Dorsolateral prefrontal cortex (tissue), 120 donors: ENCODE measurements at regions of chr9 and their contacts with region 1.

Region 1: DNA sequence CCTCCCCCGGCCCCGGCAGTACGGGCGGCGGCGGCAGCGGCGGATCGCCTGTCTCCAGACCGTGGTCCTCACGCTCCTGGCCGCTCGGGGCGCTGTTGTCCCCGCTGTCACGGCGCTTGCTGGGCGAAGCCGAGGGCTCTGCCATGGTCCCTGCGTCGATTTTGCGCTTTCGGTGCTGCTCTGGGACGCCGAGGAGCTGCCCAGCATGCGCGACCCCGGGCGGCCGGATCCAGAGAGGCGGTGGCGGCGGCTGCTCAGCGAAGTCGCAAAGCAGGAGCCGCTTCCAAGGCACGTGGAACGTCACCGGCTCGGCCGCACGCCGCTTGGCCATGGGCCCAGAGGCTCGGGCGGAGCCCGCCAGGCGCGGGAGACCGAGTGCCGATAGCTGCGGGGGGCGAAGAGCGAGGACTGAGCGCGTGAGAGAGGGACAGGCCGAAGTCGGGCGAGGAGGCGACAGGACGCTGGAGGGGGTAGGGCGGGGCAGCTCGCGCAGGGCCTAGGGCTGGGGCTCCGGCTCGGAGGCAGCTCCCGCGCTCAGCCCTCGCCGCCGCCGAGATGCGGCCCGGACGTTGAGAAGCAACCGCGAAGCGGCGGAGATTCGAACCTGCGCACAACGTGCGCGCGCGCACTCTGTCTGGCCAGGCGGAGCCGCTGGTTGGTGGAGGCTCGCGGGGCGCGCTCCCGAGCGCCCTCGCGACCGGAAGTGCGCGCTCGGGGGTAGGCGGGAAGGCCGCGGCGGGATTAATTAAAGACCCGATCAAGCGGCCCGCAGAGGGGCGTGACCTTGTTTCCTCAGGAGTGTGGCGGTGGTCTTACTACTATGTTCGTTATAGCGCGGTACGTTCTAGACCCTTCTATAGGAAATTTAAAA is at the start of gene C9orf40:
- DNase-seq: peak; percentile 78 to 94 (median 87)
- H3K4me3 ChIP-seq: peak within 1 kb of the TSS; percentile 58 to 95 (median 88)
- H3K27ac ChIP-seq: peak within 1 kb of the TSS; percentile 75 to 99 (median 96)
- H3K27me3 ChIP-seq: no peaks in the 10 kb centered on the region
- CTCF ChIP-seq: peak in 55 of 56 donors; percentile 24 to 86 (median 68)
- total RNA-seq, gene C9orf40: 5.0 to 13.6 (median 8.0) TPM

Region 2: GRCh38 chr9:74773886-74774479 is 178.5 kb before region 1 on chr9:
- intact Hi-C with region 1: loop called (anchors 1 to 5 kb)
- DNase-seq: peak; percentile 72 to 94 (median 84)
- H3K4me3 ChIP-seq: no peak overlapping the region
- H3K27ac ChIP-seq: peak overlapping the region in 4 of 59 donors; percentile 20 to 83 (median 30)
- H3K27me3 ChIP-seq: peaks cover 0 to 2% (median 0%) of the 10 kb centered on the region in 45 donors
- CTCF ChIP-seq: peak; percentile 83 to 100 (median 94)

Region 3: DNA sequence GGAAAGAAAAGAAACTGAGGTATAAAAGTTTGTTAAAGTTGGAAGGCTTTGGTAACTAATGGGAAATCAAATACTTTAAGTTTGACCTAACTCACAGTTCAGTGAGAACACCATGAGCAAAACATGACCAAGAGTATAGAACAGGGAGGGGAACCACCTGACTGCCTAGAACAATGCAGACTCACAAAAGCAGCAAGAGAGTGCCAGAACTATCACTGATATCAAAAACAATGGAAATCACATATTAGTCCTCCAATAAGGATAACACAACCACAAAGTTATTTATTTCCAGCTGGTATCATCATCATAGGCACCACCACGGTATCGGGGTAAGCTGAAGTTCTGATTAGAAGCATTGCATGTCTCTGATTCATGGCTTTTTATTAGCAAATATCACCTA is 142.3 kb before region 1 on chr9:
- intact Hi-C with region 1: loop called in 1 of 2 experiments (anchors 10 kb)
- DNase-seq: no peak
- H3K4me3 ChIP-seq: no peak overlapping the region
- H3K27ac ChIP-seq: peak overlapping the region in 6 of 59 donors; percentile 3 to 49 (median 20)
- H3K27me3 ChIP-seq: no peaks in the 10 kb centered on the region
- CTCF ChIP-seq: no peak

Region 4: GRCh38 chr9:75001719-75002422 is 49.4 kb after region 1 on chr9:
- intact Hi-C with region 1: loop called in 1 of 2 experiments (anchors 5 kb)
- DNase-seq: no peak
- H3K4me3 ChIP-seq: peak overlapping the region in 30 of 59 donors; percentile 3 to 48 (median 18)
- H3K27ac ChIP-seq: peak overlapping the region in 27 of 59 donors; percentile 2 to 81 (median 48)
- H3K27me3 ChIP-seq: no peaks in the 10 kb centered on the region
- CTCF ChIP-seq: peak; percentile 76 to 98 (median 88)

Region 5: DNA sequence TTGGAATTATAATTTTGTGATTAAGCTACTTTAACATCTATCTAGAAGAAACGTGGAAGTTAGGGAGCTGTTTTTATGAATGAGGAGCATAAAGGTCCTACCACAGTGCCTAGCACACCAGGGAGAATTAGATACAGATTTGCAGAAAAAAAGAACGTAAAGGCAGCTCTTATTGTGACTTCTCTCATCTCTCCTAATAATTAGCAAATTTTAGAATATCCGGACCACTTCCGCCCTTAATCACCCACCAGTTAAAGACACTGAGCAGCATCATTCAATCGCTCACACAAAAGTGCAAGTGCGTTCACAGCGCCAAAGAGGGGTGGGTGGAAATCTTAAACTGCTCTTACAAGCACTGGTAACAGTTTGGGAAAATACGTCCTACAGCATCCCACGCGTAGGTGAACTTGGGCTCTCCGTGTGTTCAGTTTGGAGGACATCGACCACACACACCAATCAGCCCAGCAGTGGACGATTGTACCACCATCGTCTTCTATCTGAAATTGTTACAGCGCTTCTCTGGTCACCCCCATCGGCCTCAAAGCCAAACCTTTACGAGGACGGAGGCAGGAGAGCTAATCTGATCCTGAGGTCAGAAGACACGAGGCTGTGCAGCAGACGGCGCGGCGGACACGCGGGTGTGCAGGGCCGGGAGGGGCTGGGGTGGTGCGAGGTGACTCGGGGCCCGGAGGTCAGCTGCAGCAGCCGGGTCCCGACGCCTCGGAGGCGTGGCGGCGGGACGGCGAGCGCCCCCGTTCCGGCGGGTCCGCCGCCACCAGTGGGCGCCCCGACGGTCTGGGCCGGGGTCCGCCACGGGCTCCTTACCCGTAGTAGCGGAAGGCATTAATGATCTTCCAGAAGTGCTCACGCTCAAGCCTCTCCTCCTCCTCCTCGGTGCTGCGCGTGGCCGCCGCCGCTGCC is 74.9 kb after region 1 on chr9:
- intact Hi-C with region 1: loop called in 1 of 2 experiments (anchors 5 kb)
- DNase-seq: peak; percentile 33 to 66 (median 48)
- H3K4me3 ChIP-seq: peak overlapping the region; percentile 64 to 97 (median 85)
- H3K27ac ChIP-seq: peak overlapping the region; percentile 75 to 97 (median 91)
- H3K27me3 ChIP-seq: no peaks in the 10 kb centered on the region
- CTCF ChIP-seq: peak in 2 of 56 donors; percentile 4 to 25

Region 6: GRCh38 chr9:75088260-75088905 is 135.9 kb after region 1 on chr9 and contains the start of gene OSTF1:
- intact Hi-C with region 1: loop called (anchors 5 kb)
- DNase-seq: peak; percentile 82 to 97 (median 94)
- H3K4me3 ChIP-seq: peak within 1 kb of the TSS; percentile 78 to 100 (median 95)
- H3K27ac ChIP-seq: peak within 1 kb of the TSS; percentile 74 to 100 (median 96)
- H3K27me3 ChIP-seq: no peaks in the 10 kb centered on the region
- CTCF ChIP-seq: peak in 14 of 56 donors; percentile 8 to 49 (median 17)
- total RNA-seq, gene OSTF1: 26.5 to 76.4 (median 58.6) TPM